PC-3 (cell line): ENCODE measurements at regions of chr9 and their contacts with region 1.

Region 1: GRCh38 chr9:71975833-71976232 is 64.4 kb downstream of the C9orf85 start:
- DNase-seq: peak; percentile 17
- ATAC-seq: 0 out of 2 replicates have a peak, but pooled peaks have one; percentile 31
- H3K4me3 ChIP-seq: no peak overlapping the region
- H3K27ac ChIP-seq: no peak overlapping the region
- H3K4me1 ChIP-seq: no peaks in the 10 kb centered on the region
- H3K27me3 ChIP-seq: no peaks in the 10 kb centered on the region
- CTCF ChIP-seq: peak; percentile 59

Region 2: DNA sequence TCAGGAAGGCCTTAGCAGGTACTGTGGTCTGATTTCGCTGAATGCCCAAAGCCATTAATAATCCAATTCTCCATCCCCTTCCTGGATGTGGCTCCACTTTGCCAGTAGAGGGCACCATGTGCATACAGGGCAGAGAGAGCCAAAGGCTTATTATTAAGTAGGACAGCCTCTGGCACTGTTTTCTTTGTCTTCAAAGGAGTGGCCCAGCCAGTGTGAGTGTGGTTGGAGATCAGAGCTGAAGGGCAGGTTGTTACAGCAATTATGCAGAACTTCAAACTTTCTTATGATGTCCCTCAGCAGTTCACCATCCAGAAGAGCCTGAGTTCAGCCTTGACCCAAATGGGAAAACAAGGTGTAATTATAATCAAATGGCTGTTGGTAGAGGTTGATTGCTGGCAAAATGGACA is 168.9 kb before region 1 on chr9:
- CTCF ChIA-PET with region 1: interaction called, 3 read pairs
- POLR2A ChIA-PET with region 1: no interaction called
- intact Hi-C with region 1: loop called (anchors 1 kb)
- DNase-seq: peak; percentile 81
- ATAC-seq: peak; percentile 99
- H3K4me3 ChIP-seq: no peak overlapping the region
- H3K27ac ChIP-seq: no peak overlapping the region
- H3K4me1 ChIP-seq: no peaks in the 10 kb centered on the region; the same call in 1 of the 2 replicates
- H3K27me3 ChIP-seq: no peaks in the 10 kb centered on the region
- CTCF ChIP-seq: peak; percentile 89